SK-N-SH (cell line): ENCODE measurements at regions of chr1 and their contacts with region 1.

Region 1: GRCh38 chr1:31182352-31182751 is 57.3 kb downstream of the NKAIN1 start:
- DNase-seq: peak; percentile 39
- H3K4me3 ChIP-seq: no peak overlapping the region
- H3K27ac ChIP-seq: no peak overlapping the region
- H3K4me1 ChIP-seq: no peaks in the 10 kb centered on the region; a peak in 1 of 4 replicates
- H3K27me3 ChIP-seq: no peaks in the 10 kb centered on the region
- CTCF ChIP-seq: no peak
- EP300 ChIP-seq: no peak
- RAD21 ChIP-seq: no peak

Region 2: GRCh38 chr1:30816211-30817076 is 365.9 kb before region 1 on chr1:
- CTCF ChIA-PET with region 1: no interaction called
- POLR2A ChIA-PET with region 1: no interaction called
- DNase-seq: peak; percentile 84
- H3K4me3 ChIP-seq: no peak overlapping the region; a peak in 1 of 4 replicates
- H3K27ac ChIP-seq: peak overlapping the region in 1 of 2 experiments; percentile 52; a peak in 2 of 4 replicates
- H3K4me1 ChIP-seq: peaks cover 14 to 32% of the 10 kb centered on the region in 2 experiments; a peak in 3 of 4 replicates
- H3K27me3 ChIP-seq: no peaks in the 10 kb centered on the region
- CTCF ChIP-seq: no peak
- EP300 ChIP-seq: no peak
- RAD21 ChIP-seq: no peak

Region 3: DNA sequence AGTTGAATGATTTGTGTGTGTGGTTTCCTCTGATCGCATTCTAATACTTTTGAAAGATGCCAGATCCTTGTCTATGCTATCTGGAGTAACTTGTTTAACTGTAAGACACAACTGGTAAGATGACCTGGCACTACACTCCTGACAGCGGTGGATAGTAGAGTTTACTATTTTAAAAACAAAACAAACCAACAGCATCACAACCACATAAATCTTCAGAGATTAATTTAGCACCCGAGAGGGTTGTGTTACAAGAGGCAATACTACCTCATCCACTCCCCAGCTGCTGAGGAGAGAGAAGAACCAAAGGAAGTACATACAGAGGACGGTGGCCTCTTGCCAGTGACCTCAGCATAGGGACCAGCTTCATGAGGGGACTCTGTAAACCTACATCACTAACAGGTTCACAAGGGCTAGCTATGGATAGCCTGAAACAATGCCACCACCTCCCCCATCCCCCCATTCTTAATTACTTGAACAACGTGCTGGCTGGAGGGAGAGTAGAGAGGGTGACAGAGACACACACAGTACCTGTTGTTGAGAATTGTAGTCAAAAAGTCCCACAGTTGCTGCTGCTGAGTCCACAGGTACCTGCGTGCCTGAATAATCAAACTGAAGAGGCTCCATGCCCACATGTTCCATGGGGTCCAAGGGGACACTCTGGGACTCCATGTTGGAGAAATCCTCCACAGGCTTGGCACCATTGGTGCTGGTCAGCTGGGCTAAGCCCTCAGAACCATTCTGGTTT is 190.3 kb before region 1 on chr1:
- CTCF ChIA-PET with region 1: no interaction called
- POLR2A ChIA-PET with region 1: no interaction called
- DNase-seq: no peak
- H3K4me3 ChIP-seq: no peak overlapping the region
- H3K27ac ChIP-seq: peak overlapping the region in 1 of 2 experiments; percentile 11; a peak in 1 of 4 replicates
- H3K4me1 ChIP-seq: peaks cover 6 to 30% of the 10 kb centered on the region in 2 experiments
- H3K27me3 ChIP-seq: no peaks in the 10 kb centered on the region
- CTCF ChIP-seq: no peak
- EP300 ChIP-seq: no peak
- RAD21 ChIP-seq: no peak

Region 4: DNA sequence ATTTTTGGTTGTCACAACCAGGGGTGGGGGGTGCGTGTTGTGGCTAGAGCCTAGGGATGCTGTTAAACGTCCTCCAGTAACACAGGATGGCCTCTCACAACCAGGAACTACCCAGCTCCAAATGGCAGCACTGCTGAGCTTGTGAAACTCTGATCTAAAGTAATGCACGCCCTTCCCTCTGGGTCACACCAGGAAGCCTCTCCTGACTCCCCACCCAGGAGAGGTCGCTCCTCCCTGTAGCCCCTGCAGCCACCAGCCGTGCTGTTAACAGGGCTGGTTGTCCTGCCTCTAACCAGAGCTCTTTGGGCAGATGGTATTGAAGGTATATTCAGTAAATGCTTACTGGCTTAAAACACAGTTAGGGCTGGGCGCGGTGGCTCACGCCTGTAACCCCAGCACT is 15.9 kb before region 1 on chr1:
- CTCF ChIA-PET with region 1: interaction called, 224 read pairs
- POLR2A ChIA-PET with region 1: no interaction called
- DNase-seq: no peak
- H3K4me3 ChIP-seq: no peak overlapping the region
- H3K27ac ChIP-seq: no peak overlapping the region
- H3K4me1 ChIP-seq: peaks cover 3 to 8% of the 10 kb centered on the region in 2 experiments; a peak in 2 of 4 replicates
- H3K27me3 ChIP-seq: no peaks in the 10 kb centered on the region
- CTCF ChIP-seq: no peak
- EP300 ChIP-seq: no peak
- RAD21 ChIP-seq: no peak

Region 5: DNA sequence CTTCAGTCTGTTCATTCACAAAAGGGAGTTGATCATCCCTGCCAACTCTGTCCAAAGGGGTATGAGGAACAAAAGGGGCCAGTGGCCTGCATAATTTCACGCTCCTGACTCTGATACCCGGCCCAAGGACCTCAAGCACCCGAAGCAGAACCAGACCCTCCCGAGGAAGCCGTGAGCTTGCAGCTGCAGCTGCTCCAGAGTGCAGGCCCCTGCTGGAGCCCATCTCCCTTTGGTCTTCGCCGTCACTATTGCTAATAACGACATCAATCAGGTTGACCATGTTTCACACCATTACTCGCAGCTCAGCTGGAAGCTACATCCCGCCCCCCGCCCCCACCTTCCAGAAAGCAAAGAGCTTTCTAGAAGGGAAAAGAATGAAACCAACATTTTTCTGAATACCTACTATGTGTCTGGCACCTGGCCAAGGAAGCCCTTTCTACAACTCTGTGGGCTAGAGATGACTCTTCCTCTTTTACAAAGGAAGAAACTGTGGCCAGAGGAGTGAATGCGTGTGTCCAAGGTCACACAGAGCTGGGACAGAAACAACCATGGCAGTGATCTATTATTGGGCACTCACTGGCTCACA is 51.9 kb after region 1 on chr1:
- CTCF ChIA-PET with region 1: interaction called, 65 read pairs
- POLR2A ChIA-PET with region 1: no interaction called
- DNase-seq: no peak
- H3K4me3 ChIP-seq: no peak overlapping the region
- H3K27ac ChIP-seq: no peak overlapping the region
- H3K4me1 ChIP-seq: peaks cover 0 to 10% of the 10 kb centered on the region in 2 experiments; a peak in 1 of 4 replicates
- H3K27me3 ChIP-seq: peaks cover 30% of the 10 kb centered on the region; the same call in 1 of the 2 replicates
- CTCF ChIP-seq: no peak
- EP300 ChIP-seq: no peak
- RAD21 ChIP-seq: no peak

Region 6: GRCh38 chr1:31289021-31289420 is 106.7 kb after region 1 on chr1:
- CTCF ChIA-PET with region 1: interaction called, 11 read pairs
- POLR2A ChIA-PET with region 1: no interaction called
- DNase-seq: no peak
- H3K4me3 ChIP-seq: no peak overlapping the region
- H3K27ac ChIP-seq: no peak overlapping the region
- H3K4me1 ChIP-seq: peaks cover 0 to 5% of the 10 kb centered on the region in 2 experiments; a peak in 1 of 4 replicates
- H3K27me3 ChIP-seq: no peaks in the 10 kb centered on the region
- CTCF ChIP-seq: no peak
- EP300 ChIP-seq: no peak
- RAD21 ChIP-seq: no peak

Region 7: GRCh38 chr1:31335007-31335406 is 152.7 kb after region 1 on chr1:
- CTCF ChIA-PET with region 1: interaction called, 134 read pairs
- POLR2A ChIA-PET with region 1: no interaction called
- DNase-seq: peak; percentile 62
- H3K4me3 ChIP-seq: no peak overlapping the region
- H3K27ac ChIP-seq: no peak overlapping the region
- H3K4me1 ChIP-seq: no peaks in the 10 kb centered on the region; a peak in 1 of 4 replicates
- H3K27me3 ChIP-seq: no peaks in the 10 kb centered on the region
- CTCF ChIP-seq: peak; percentile 73
- EP300 ChIP-seq: no peak
- RAD21 ChIP-seq: peak; percentile 86

Region 8: GRCh38 chr1:31428436-31429355 is 246.3 kb after region 1 on chr1:
- CTCF ChIA-PET with region 1: interaction called, 213 read pairs
- POLR2A ChIA-PET with region 1: no interaction called
- DNase-seq: no peak
- H3K4me3 ChIP-seq: no peak overlapping the region
- H3K27ac ChIP-seq: no peak overlapping the region
- H3K4me1 ChIP-seq: no peaks in the 10 kb centered on the region
- H3K27me3 ChIP-seq: no peaks in the 10 kb centered on the region
- CTCF ChIP-seq: no peak
- EP300 ChIP-seq: no peak
- RAD21 ChIP-seq: no peak